ENCODE measurements at regions of chr14 and their contacts with region 1.

Region 1: GRCh38 chr14:68210729-68211299 is 391.2 kb downstream of the RAD51B start:
- DNase-seq: peak; percentile 38 to 75
- ATAC-seq: peak; percentile 89 to 93 (median 90)
- H3K4me3 ChIP-seq: peak overlapping the region; percentile 19
- H3K4me3 Mint-ChIP-seq: peak overlapping the region; percentile 89
- H3K27ac ChIP-seq: peak overlapping the region; percentile 92
- H3K27ac Mint-ChIP-seq: peak overlapping the region; percentile 89 to 97
- H3K4me1 ChIP-seq: peaks cover 30% of the 10 kb centered on the region
- H3K4me1 Mint-ChIP-seq: peaks cover 74 to 76% of the 10 kb centered on the region in 2 donors
- H3K27me3 ChIP-seq: no peaks in the 10 kb centered on the region
- H3K27me3 Mint-ChIP-seq: no peaks in the 10 kb centered on the region
- CTCF ChIP-seq: no peak

Region 2: DNA sequence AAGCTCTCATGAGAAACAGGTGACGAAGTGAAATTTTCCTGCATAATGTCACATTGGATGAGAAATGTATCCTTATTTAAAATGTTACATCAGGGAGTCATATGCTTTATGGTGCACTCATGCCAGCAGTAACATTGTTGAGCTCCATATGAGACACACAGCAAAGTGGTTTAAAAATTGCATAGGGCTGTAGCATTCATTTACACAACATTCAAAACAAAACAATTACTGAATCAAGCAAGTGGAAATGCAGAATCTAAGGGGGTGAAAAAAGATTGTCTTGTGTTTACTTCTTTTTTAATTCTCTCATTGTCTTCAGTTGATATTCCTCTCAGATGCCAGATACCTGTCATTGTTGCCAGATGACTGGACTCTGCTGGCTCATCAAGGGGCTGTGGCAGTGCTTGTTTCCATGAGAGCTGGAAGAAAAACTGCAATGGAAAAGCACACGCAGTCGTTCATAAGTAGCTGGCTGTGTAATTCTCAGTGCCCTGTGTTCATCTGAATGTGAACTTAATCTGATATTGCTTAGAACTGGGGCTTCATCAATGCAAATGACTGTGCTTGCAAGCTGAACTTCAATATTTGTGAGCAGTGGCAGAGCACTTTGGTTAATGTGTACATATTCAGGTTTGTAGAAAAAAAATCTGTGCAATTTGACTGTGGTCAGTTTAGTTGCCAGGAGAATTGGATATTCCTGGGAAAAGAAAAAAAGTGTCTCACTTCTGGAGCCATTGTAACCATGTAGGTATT is 85.7 kb before region 1 on chr14:
- intact Hi-C with region 1: no loop called
- DNase-seq: no peak
- ATAC-seq: no peak
- H3K4me3 ChIP-seq: no peak overlapping the region
- H3K4me3 Mint-ChIP-seq: no peak overlapping the region
- H3K27ac ChIP-seq: no peak overlapping the region
- H3K27ac Mint-ChIP-seq: no peak overlapping the region
- H3K4me1 ChIP-seq: no peaks in the 10 kb centered on the region
- H3K4me1 Mint-ChIP-seq: no peaks in the 10 kb centered on the region
- H3K27me3 ChIP-seq: no peaks in the 10 kb centered on the region
- H3K27me3 Mint-ChIP-seq: no peaks in the 10 kb centered on the region
- CTCF ChIP-seq: no peak

Region 3: DNA sequence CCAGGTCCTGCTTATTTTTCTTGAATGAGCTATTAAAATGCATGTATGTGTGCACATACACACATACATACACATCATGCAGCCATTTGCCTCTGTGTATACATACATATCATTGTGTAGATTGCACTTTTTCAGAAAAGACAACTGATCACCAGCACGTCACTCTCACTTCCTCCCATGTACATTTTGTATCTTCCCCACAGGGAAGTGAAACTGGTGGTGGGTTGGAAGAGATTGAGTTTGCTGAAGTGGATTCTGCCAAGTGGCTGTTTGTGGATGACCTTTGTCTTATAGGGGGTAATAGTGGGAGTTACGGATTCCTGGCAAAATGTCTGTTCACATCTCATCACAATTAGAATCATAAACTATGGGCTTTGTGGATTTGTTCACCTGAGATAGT is 57.4 kb after region 1 on chr14:
- intact Hi-C with region 1: loop called (anchors 5 kb)
- DNase-seq: peak in 1 of 2 donors; percentile 51
- ATAC-seq: peak; percentile 16 to 41 (median 25)
- H3K4me3 ChIP-seq: no peak overlapping the region
- H3K4me3 Mint-ChIP-seq: peak overlapping the region; percentile 80
- H3K27ac ChIP-seq: peak overlapping the region; percentile 76
- H3K27ac Mint-ChIP-seq: peak overlapping the region; percentile 92 to 93
- H3K4me1 ChIP-seq: peaks cover 26% of the 10 kb centered on the region
- H3K4me1 Mint-ChIP-seq: peaks cover 48 to 52% of the 10 kb centered on the region in 2 donors
- H3K27me3 ChIP-seq: no peaks in the 10 kb centered on the region
- H3K27me3 Mint-ChIP-seq: no peaks in the 10 kb centered on the region
- CTCF ChIP-seq: no peak

Region 4: GRCh38 chr14:68780358-68781160 is 569.7 kb after region 1 on chr14:
- intact Hi-C with region 1: loop called (anchors 2 kb)
- DNase-seq: peak in 1 of 2 donors; percentile 68
- ATAC-seq: peak; percentile 25 to 56 (median 36)
- H3K4me3 ChIP-seq: peak overlapping the region; percentile 0
- H3K4me3 Mint-ChIP-seq: peak overlapping the region; percentile 91
- H3K27ac ChIP-seq: peak overlapping the region; percentile 88
- H3K27ac Mint-ChIP-seq: peak overlapping the region; percentile 94 to 95
- H3K4me1 ChIP-seq: peaks cover 67% of the 10 kb centered on the region
- H3K4me1 Mint-ChIP-seq: peaks cover 59 to 63% of the 10 kb centered on the region in 2 donors
- H3K27me3 ChIP-seq: no peaks in the 10 kb centered on the region
- H3K27me3 Mint-ChIP-seq: no peaks in the 10 kb centered on the region
- CTCF ChIP-seq: no peak

Region 5: GRCh38 chr14:68843471-68844209 is 632.8 kb after region 1 on chr14:
- intact Hi-C with region 1: loop called (anchors 1 kb)
- DNase-seq: peak; percentile 75 to 86
- ATAC-seq: peak; percentile 64 to 73 (median 71)
- H3K4me3 ChIP-seq: no peak overlapping the region
- H3K4me3 Mint-ChIP-seq: peak overlapping the region; percentile 71
- H3K27ac ChIP-seq: no peak overlapping the region
- H3K27ac Mint-ChIP-seq: peak overlapping the region; percentile 31 to 86
- H3K4me1 ChIP-seq: peaks cover 32% of the 10 kb centered on the region
- H3K4me1 Mint-ChIP-seq: peaks cover 48 to 50% of the 10 kb centered on the region in 2 donors
- H3K27me3 ChIP-seq: no peaks in the 10 kb centered on the region
- H3K27me3 Mint-ChIP-seq: peaks cover 0 to 7% of the 10 kb centered on the region in 2 donors
- CTCF ChIP-seq: peak; percentile 93

Region 6: DNA sequence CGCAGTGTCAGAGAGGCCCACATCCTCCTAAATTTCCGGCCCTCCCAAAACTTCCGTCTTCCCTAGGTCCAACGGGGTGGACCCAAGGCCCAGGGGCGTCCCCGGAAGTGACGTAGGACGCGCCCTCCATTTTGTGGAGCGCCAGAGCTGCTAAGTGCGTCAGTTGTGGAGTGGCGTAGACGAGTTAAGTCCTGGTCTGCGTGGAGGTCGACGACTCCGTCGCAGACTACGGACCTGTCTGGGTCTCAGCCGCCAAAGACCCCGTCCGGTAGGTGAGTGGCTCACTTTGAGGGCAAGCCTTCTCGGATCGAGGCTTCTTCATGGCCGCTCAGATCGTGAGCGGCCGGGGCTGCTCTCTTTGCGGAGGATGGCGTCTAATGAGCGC is 1556.2 kb after region 1 on chr14 and contains the start of gene SRSF5:
- intact Hi-C with region 1: loop called (anchors 5 kb)
- DNase-seq: peak; percentile 95 to 98
- ATAC-seq: peak; percentile 74 to 90 (median 80)
- H3K4me3 ChIP-seq: peak within 1 kb of the TSS; percentile 73
- H3K4me3 Mint-ChIP-seq: peak within 1 kb of the TSS; percentile 100
- H3K27ac ChIP-seq: peak within 1 kb of the TSS; percentile 89
- H3K27ac Mint-ChIP-seq: peak within 1 kb of the TSS; percentile 97 to 99
- H3K4me1 ChIP-seq: peaks cover 35% of the 10 kb centered on the region
- H3K4me1 Mint-ChIP-seq: peaks cover 61 to 65% of the 10 kb centered on the region in 2 donors
- H3K27me3 ChIP-seq: no peaks in the 10 kb centered on the region
- H3K27me3 Mint-ChIP-seq: no peaks in the 10 kb centered on the region
- CTCF ChIP-seq: no peak
- total RNA-seq, gene SRSF5: 1,327 to 1,669 (median 1,634) TPM